ENCODE measurements at regions of chr5 and their contacts with region 1.

Region 1: DNA sequence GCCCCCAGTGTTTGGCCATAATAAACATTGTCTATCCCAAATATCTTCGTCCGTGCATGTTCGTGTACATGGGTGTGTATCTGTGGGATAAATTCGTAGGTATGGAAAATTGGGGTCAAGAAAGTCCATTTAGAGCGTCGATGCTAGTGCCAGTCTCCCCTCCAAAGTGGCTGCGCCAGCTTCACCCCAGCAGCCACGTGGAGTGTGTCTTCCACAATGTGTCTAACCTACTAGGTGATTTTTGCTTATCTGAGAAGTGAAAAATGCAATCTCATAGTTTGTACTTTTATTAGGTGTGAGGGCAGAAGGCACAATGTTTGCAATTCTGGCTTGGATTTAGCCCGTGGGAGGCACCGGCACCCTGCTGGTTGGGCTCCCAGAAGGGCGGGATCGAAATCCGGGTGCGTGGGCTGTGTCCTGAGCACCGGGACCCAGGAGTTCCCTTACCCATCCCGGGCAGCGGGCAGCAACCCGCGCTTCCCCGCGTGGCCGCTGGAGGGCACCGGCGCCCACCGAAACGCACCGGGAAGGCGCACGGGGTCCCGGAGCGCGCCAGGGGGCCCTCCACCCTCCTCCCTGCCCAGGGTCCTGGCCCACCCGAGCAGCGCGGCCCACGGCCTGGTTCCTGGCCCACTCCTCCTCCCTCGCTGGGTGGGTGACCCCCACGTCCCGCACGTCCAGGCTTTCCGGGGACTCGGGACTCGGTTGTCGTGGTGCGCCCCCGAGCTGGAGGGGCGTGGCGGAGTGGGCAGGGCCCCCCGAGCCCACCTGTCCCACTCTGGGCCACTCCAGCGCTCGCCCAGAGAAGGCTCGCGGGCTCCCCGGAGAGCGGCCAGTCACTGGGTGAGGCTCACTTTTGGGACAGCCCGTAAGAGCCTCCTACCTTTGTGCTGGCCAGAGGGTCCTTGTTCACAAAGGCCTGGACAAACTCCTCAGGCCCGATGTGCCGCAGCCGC is 55.4 kb upstream of the RNF130 start:
- DNase-seq: peak; percentile 10
- H3K4me3 ChIP-seq: peak overlapping the region; percentile 40
- H3K27ac ChIP-seq: no peak overlapping the region
- H3K4me1 ChIP-seq: peaks cover 8% of the 10 kb centered on the region
- H3K27me3 ChIP-seq: peaks cover 21% of the 10 kb centered on the region
- CTCF ChIP-seq: peak; percentile 78

Region 2: GRCh38 chr5:178515776-178516503 is 1611.1 kb before region 1 on chr5:
- CTCF ChIA-PET with region 1: no interaction called
- POLR2A ChIA-PET with region 1: no interaction called
- intact Hi-C with region 1: no loop called
- DNase-seq: no peak
- H3K4me3 ChIP-seq: no peak overlapping the region
- H3K27ac ChIP-seq: no peak overlapping the region
- H3K4me1 ChIP-seq: no peaks in the 10 kb centered on the region
- H3K27me3 ChIP-seq: no peaks in the 10 kb centered on the region
- CTCF ChIP-seq: no peak

Region 3: DNA sequence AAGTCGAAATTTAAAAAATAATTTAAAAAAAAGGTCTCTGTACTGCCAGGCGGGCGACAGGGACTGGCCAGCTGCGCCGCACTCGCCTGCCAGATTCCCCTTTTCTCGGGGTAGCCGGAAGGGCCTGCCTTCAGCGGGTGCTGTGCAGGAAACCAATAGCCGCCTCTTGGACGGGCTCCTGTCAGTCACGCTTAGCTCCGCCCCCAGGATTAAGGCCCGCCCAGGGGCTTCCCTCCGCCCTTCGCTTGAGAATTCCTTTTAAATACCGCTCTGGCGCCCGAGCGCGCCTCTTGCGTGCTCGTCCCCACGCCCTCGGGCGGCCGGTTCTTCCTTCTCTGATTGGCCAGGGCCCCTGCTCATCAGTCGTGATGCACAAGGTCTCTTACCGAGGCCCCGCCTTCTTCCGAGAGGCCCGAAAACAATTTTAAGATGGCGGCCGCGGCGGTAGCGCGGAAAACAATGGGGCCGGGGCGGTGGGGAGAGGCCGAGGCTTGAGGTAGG is 394.5 kb before region 1 on chr5 and contains the start of gene MAML1:
- CTCF ChIA-PET with region 1: no interaction called
- POLR2A ChIA-PET with region 1: no interaction called
- intact Hi-C with region 1: no loop called
- DNase-seq: peak; percentile 99
- H3K4me3 ChIP-seq: peak within 1 kb of the TSS; percentile 91
- H3K27ac ChIP-seq: peak within 1 kb of the TSS; percentile 97
- H3K4me1 ChIP-seq: peaks cover 10% of the 10 kb centered on the region
- H3K27me3 ChIP-seq: no peaks in the 10 kb centered on the region
- CTCF ChIP-seq: no peak
- total RNA-seq, gene MAML1: 34.3 and 34.4 TPM in 2 replicates

Region 4: GRCh38 chr5:180209137-180209581 is 82.2 kb after region 1 on chr5 and contains the start of gene RASGEF1C:
- CTCF ChIA-PET with region 1: interaction called, 20 read pairs
- POLR2A ChIA-PET with region 1: no interaction called
- intact Hi-C with region 1: no loop called
- DNase-seq: peak; percentile 70
- H3K4me3 ChIP-seq: peak within 1 kb of the TSS; percentile 28
- H3K27ac ChIP-seq: no peak within 1 kb of the TSS
- H3K4me1 ChIP-seq: peaks cover 5% of the 10 kb centered on the region
- H3K27me3 ChIP-seq: no peaks in the 10 kb centered on the region
- CTCF ChIP-seq: peak; percentile 17; the same call in 1 of the 2 replicates
- total RNA-seq, gene RASGEF1C: not detected in 2 replicates

Region 5: DNA sequence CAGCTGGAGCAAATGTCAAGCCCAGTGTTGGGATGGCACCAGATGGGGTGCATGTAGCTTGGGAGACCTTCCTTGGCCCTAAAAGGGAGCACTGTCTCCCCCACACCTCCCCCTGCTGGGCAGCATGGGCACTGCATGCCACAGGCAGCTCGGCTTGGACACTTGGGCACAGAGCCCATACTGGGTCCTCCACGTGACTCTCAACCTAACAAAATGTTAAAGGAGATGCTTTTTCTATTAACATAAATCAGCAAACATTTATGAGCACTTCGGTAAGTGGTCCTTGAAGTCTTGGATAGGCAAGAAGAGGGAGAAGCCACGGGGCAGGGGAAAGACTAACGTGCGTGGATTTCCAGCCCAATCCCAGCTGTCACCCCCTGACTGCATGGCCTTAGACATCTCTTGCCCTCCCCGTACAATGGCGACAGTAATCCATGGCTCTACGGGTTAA is 188.8 kb after region 1 on chr5:
- CTCF ChIA-PET with region 1: no interaction called
- POLR2A ChIA-PET with region 1: no interaction called
- intact Hi-C with region 1: loop called (anchors 5 kb)
- DNase-seq: peak; percentile 56
- H3K4me3 ChIP-seq: no peak overlapping the region
- H3K27ac ChIP-seq: no peak overlapping the region
- H3K4me1 ChIP-seq: no peaks in the 10 kb centered on the region
- H3K27me3 ChIP-seq: no peaks in the 10 kb centered on the region
- CTCF ChIP-seq: peak; percentile 88

Measured in A673 (cell line).